CD8-positive, alpha-beta memory T cell (primary cell): ENCODE measurements at regions of chr16 and their contacts with region 1.

Region 1: GRCh38 chr16:53435066-53435688 is 906 bp downstream of the RBL2 start:
- DNase-seq: peak; percentile 54 to 83 (median 76)
- H3K4me3 ChIP-seq: peak overlapping the region; percentile 98
- H3K4me3 Mint-ChIP-seq: peak overlapping the region; percentile 95 to 99 (median 96)
- H3K27ac ChIP-seq: peak overlapping the region; percentile 97
- H3K27ac Mint-ChIP-seq: peak overlapping the region; percentile 95 to 99 (median 98)
- H3K4me1 ChIP-seq: peaks cover 38% of the 10 kb centered on the region
- H3K4me1 Mint-ChIP-seq: peaks cover 43 to 54% (median 52%) of the 10 kb centered on the region in 3 donors
- H3K27me3 ChIP-seq: no peaks in the 10 kb centered on the region
- H3K27me3 Mint-ChIP-seq: no peaks in the 10 kb centered on the region

Region 2: DNA sequence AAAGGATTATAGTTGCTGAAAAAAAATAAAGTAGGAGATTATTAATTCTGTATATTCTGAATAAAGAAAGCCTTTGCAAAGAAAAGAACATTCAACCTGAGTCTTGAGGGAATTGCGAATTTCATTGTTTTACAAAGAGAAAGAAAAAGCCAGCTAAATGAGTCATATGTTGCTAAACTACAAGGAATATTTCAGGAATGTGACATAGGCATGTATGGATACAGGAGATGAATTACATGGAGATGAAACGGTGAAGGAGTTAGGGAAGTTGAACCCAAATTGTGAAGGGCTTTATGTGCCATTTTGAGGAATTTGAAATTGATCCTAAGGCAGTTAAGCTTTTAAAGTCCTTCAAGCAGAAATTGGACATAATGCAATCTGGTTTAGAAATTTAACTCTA is 178.2 kb before region 1 on chr16:
- CTCF ChIA-PET with region 1: no interaction called
- POLR2A ChIA-PET with region 1: no interaction called
- DNase-seq: no peak
- H3K4me3 ChIP-seq: no peak overlapping the region
- H3K4me3 Mint-ChIP-seq: no peak overlapping the region
- H3K27ac ChIP-seq: no peak overlapping the region
- H3K27ac Mint-ChIP-seq: no peak overlapping the region
- H3K4me1 ChIP-seq: no peaks in the 10 kb centered on the region
- H3K4me1 Mint-ChIP-seq: peaks cover 0 to 5% (median 1%) of the 10 kb centered on the region in 3 donors
- H3K27me3 ChIP-seq: no peaks in the 10 kb centered on the region
- H3K27me3 Mint-ChIP-seq: no peaks in the 10 kb centered on the region

Region 3: GRCh38 chr16:53356478-53357200 is 78.5 kb before region 1 on chr16:
- CTCF ChIA-PET with region 1: no interaction called
- POLR2A ChIA-PET with region 1: interaction called, 13 read pairs
- DNase-seq: no peak
- H3K4me3 ChIP-seq: no peak overlapping the region
- H3K4me3 Mint-ChIP-seq: no peak overlapping the region
- H3K27ac ChIP-seq: no peak overlapping the region
- H3K27ac Mint-ChIP-seq: no peak overlapping the region
- H3K4me1 ChIP-seq: no peaks in the 10 kb centered on the region
- H3K4me1 Mint-ChIP-seq: peaks cover 0 to 4% (median 0%) of the 10 kb centered on the region in 3 donors
- H3K27me3 ChIP-seq: no peaks in the 10 kb centered on the region
- H3K27me3 Mint-ChIP-seq: peaks cover 3 to 16% of the 10 kb centered on the region in 2 donors

Region 4: DNA sequence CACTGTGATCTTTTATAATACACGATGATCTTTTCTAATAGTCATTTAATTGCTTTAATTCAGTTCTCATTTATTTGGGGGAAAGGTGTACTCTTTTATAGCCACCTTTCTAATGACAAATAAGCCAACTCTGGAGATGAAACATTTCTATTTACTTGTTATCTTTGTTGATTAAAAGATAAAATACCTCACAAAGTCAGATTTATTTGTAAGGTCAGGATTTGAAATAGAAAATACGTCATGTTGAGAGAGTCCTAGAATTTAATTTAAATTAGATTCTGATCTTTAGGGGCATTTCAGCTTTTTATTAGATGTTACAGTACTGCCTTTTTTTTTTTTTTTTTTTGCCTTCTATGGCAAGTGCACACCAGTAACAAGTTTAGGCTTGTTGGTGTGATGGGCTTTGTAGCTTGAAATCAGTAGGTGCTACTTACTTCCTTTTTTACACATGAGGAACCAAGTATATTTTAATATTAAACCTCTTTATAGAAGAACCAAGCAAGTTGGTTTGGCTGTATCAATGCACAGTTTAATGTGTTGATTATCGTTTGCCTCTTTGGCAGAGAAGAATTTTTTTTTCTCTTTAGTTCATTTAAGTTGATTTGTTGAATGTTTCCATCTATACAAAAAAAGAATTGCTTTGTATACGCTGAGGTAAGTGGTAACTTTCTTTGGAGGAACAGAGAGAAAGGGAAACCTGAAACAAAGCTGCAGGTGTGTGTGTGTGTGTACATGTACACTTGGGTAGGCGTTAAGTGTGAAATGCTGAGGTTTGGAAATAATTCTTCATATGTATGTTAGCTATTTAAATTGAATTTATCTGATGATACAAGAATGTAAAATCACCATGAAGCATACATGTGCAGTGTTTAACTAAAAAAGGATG is 14.7 kb after region 1 on chr16:
- CTCF ChIA-PET with region 1: interaction called, 21 read pairs
- POLR2A ChIA-PET with region 1: interaction called, 69 read pairs
- DNase-seq: peak in 1 of 5 donors; percentile 39
- H3K4me3 ChIP-seq: peak overlapping the region; percentile 4
- H3K4me3 Mint-ChIP-seq: peak overlapping the region; percentile 66 to 98 (median 87)
- H3K27ac ChIP-seq: no peak overlapping the region
- H3K27ac Mint-ChIP-seq: peak overlapping the region; percentile 76 to 92 (median 85)
- H3K4me1 ChIP-seq: peaks cover 60% of the 10 kb centered on the region
- H3K4me1 Mint-ChIP-seq: peaks cover 62 to 85% (median 83%) of the 10 kb centered on the region in 3 donors
- H3K27me3 ChIP-seq: no peaks in the 10 kb centered on the region
- H3K27me3 Mint-ChIP-seq: no peaks in the 10 kb centered on the region

Region 5: DNA sequence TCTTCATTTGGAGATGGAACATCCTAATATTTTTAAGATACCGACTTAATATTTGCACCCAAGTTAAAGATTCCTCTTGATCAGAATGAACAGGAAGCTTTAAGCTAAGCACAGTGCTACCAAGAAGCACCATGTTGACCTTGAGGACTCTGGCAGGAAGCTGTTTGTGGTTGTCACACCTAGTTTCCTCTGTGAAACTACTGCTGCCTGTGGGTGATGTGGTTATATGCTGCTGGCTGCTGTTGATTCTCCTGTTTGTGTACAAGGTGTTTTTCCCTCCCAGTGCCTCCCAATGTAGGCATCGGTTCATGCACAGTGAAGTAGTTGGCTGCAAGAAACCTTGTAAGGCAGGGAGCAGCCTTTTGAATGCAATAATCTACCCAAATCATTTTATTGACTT is 22.5 kb after region 1 on chr16:
- CTCF ChIA-PET with region 1: interaction called, 29 read pairs
- POLR2A ChIA-PET with region 1: interaction called, 76 read pairs
- DNase-seq: peak; percentile 57 to 91 (median 88)
- H3K4me3 ChIP-seq: peak overlapping the region; percentile 60
- H3K4me3 Mint-ChIP-seq: peak overlapping the region; percentile 85 to 91 (median 87)
- H3K27ac ChIP-seq: no peak overlapping the region
- H3K27ac Mint-ChIP-seq: peak overlapping the region; percentile 22 to 99 (median 90)
- H3K4me1 ChIP-seq: peaks cover 93% of the 10 kb centered on the region
- H3K4me1 Mint-ChIP-seq: peaks cover 83 to 99% (median 97%) of the 10 kb centered on the region in 3 donors
- H3K27me3 ChIP-seq: no peaks in the 10 kb centered on the region
- H3K27me3 Mint-ChIP-seq: no peaks in the 10 kb centered on the region

Region 6: GRCh38 chr16:53503270-53503923 is 68.2 kb after region 1 on chr16:
- CTCF ChIA-PET with region 1: interaction called, 12 read pairs
- POLR2A ChIA-PET with region 1: interaction called, 49 read pairs
- DNase-seq: peak; percentile 99 to 100 (median 100)
- H3K4me3 ChIP-seq: peak overlapping the region; percentile 78
- H3K4me3 Mint-ChIP-seq: peak overlapping the region; percentile 84 to 97 (median 94)
- H3K27ac ChIP-seq: peak overlapping the region; percentile 68
- H3K27ac Mint-ChIP-seq: peak overlapping the region; percentile 80 to 99 (median 93)
- H3K4me1 ChIP-seq: peaks cover 35% of the 10 kb centered on the region
- H3K4me1 Mint-ChIP-seq: peaks cover 48 to 60% (median 50%) of the 10 kb centered on the region in 3 donors
- H3K27me3 ChIP-seq: no peaks in the 10 kb centered on the region
- H3K27me3 Mint-ChIP-seq: no peaks in the 10 kb centered on the region

Region 7: DNA sequence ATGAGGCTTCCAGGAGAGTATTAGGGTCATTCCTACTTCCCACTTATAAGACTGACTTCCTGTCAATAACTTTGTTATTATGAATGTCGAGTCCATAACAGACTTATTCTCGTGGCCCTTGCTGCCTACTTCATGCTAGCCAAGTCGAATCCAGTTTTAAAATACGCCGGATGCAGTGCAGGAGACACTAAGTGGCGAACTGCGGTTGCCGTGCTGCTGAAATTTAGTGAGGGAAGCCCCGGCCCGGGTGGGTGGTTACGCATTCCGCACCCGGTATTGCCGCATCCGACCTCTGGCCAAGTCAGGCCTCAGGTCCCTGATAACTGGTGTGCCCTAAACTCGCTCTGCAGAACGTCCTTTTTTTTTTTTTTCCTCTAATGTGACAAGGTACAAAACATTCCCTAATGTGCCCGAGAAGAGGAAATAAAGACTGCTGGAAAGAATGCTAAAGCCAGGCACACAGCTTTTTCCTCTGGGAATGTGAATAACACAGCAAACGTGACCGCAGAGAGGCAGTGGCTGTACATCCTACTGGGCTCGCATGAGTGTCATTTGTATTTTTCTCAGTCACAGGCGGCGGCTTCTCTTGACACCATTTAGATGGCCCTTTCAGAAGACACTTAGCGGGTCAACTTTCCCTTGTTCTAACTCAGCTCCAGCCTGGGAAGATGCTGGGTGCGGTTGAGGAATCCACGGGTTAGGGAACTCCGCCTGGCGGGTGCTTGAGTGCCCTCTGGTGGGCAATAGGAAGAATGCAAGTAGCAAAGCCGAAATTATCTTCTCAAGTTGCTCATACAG is 74.9 kb after region 1 on chr16:
- CTCF ChIA-PET with region 1: interaction called, 10 read pairs
- POLR2A ChIA-PET with region 1: interaction called, 49 read pairs
- DNase-seq: peak; percentile 34 to 70 (median 52)
- H3K4me3 ChIP-seq: peak overlapping the region; percentile 20
- H3K4me3 Mint-ChIP-seq: peak overlapping the region; percentile 29 to 72 (median 61)
- H3K27ac ChIP-seq: no peak overlapping the region
- H3K27ac Mint-ChIP-seq: peak overlapping the region in 6 of 8 donors; percentile 33 to 80 (median 69)
- H3K4me1 ChIP-seq: peaks cover 14% of the 10 kb centered on the region
- H3K4me1 Mint-ChIP-seq: peaks cover 44 to 59% (median 52%) of the 10 kb centered on the region in 3 donors
- H3K27me3 ChIP-seq: no peaks in the 10 kb centered on the region
- H3K27me3 Mint-ChIP-seq: peaks cover 0 to 2% of the 10 kb centered on the region in 2 donors